Sigmoid colon (tissue), 7 donors: ENCODE measurements at regions of chr3 and their contacts with region 1.

Region 1: DNA sequence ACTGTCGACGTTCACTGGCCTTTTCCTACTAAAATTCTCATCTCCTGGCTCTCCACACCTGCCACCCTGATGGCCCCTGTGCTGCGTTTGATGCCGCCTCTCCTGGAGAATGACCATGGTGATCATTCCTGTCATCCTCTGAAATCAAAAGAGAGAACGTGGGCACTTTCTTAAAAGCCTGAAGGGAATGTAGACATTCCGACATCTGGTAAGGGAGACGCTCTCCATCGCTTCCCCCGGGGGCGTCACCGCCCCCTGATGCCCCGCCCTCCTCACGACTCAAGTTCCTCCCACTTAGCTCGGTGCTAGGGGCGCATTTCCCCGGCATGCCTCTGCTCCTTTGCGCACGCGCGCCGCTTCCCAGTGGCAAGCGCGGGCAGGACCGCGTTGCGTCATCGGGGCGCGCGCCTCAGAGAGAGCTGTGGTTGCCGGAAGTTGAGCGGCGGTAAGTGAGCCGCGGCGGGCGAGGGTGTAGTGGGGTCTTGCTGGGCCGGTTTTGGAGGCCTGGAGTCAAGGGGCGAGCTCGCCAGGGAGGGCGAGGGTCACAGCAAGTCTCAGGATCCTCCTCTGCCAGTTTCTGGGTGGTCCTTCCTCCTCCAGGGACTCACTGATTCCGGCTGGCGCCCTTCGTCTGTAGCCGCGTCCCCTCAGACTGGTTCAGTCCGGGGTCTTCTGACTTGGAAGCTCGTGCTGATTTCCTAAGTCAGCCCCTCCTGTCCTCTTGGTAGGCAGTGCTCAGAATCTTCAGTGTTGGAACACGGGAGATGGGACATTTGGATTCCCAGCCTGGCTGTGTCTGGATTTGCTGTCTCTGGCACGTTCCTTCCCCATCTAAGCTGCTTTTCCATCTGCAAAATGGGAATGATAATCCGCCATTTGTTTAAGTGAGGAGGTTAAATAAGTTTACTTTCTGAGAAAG is at the start of gene ATG7:
- DNase-seq: peak; percentile 99
- H3K4me3 ChIP-seq: peak within 1 kb of the TSS; percentile 87 to 92 (median 88)
- H3K27ac ChIP-seq: peak within 1 kb of the TSS; percentile 74 to 87 (median 86)
- H3K4me1 ChIP-seq: peaks cover 0 to 30% (median 18%) of the 10 kb centered on the region in 4 donors
- H3K27me3 ChIP-seq: no peaks in the 10 kb centered on the region
- CTCF ChIP-seq: peak in 1 of 4 experiments; percentile 20
- EP300 ChIP-seq: no peak
- POLR2A ChIP-seq: peak; percentile 73 to 85
- total RNA-seq, gene ATG7: 34.8 to 62.9 (median 55.0) TPM

Region 2: GRCh38 chr3:11185564-11186317 is 86.5 kb before region 1 on chr3:
- intact Hi-C with region 1: loop called (anchors 5 kb)
- DNase-seq: peak; percentile 92
- H3K4me3 ChIP-seq: peak overlapping the region in 1 of 4 donors; percentile 7
- H3K27ac ChIP-seq: peak overlapping the region; percentile 54 to 77 (median 69)
- H3K4me1 ChIP-seq: peaks cover 0 to 29% (median 24%) of the 10 kb centered on the region in 4 donors
- H3K27me3 ChIP-seq: no peaks in the 10 kb centered on the region
- CTCF ChIP-seq: no peak
- EP300 ChIP-seq: peak in 2 of 4 donors; percentile 65 to 77
- POLR2A ChIP-seq: no peak

Region 3: GRCh38 chr3:11226042-11226370 is 46.2 kb before region 1 on chr3:
- intact Hi-C with region 1: loop called (anchors 5 kb)
- DNase-seq: no peak
- H3K4me3 ChIP-seq: no peak overlapping the region
- H3K27ac ChIP-seq: peak overlapping the region; percentile 63 to 78 (median 73)
- H3K4me1 ChIP-seq: peaks cover 0 to 30% (median 13%) of the 10 kb centered on the region in 4 donors
- H3K27me3 ChIP-seq: no peaks in the 10 kb centered on the region
- CTCF ChIP-seq: no peak
- EP300 ChIP-seq: no peak
- POLR2A ChIP-seq: no peak